ENCODE measurements at regions of chr16 and their contacts with region 1.

Region 1: DNA sequence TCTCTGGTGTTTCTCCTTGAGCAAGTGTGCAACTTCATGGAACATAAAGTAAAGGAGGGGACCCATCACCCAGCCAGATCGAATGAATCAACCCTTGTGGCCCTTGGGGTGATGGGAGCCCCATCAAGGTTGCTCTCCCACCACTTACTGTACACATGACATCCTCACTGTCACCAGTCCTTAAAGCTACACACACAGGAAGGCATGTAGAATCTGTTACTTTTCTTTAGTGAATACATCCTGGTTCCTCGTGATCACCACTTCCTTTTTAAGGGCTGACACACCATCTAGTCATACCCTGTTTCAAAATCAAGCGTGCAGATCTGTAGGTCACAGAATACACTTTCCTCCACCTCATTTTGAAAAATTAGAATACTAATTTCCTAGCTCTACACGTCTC is 22.6 kb upstream of the MPHOSPH6 start:
- DNase-seq: peak; percentile 15
- H3K4me3 Mint-ChIP-seq: no peak overlapping the region
- H3K27ac Mint-ChIP-seq: peak overlapping the region; percentile 86
- H3K4me1 Mint-ChIP-seq: peaks cover 28% of the 10 kb centered on the region
- H3K27me3 Mint-ChIP-seq: peaks cover 8% of the 10 kb centered on the region

Region 2: GRCh38 chr16:82082543-82083244 is 110.0 kb before region 1 on chr16:
- intact Hi-C with region 1: loop called (anchors 5 kb)
- DNase-seq: no peak
- H3K4me3 Mint-ChIP-seq: no peak overlapping the region
- H3K27ac Mint-ChIP-seq: no peak overlapping the region
- H3K4me1 Mint-ChIP-seq: peaks cover 11% of the 10 kb centered on the region
- H3K27me3 Mint-ChIP-seq: peaks cover 28% of the 10 kb centered on the region

Region 3: DNA sequence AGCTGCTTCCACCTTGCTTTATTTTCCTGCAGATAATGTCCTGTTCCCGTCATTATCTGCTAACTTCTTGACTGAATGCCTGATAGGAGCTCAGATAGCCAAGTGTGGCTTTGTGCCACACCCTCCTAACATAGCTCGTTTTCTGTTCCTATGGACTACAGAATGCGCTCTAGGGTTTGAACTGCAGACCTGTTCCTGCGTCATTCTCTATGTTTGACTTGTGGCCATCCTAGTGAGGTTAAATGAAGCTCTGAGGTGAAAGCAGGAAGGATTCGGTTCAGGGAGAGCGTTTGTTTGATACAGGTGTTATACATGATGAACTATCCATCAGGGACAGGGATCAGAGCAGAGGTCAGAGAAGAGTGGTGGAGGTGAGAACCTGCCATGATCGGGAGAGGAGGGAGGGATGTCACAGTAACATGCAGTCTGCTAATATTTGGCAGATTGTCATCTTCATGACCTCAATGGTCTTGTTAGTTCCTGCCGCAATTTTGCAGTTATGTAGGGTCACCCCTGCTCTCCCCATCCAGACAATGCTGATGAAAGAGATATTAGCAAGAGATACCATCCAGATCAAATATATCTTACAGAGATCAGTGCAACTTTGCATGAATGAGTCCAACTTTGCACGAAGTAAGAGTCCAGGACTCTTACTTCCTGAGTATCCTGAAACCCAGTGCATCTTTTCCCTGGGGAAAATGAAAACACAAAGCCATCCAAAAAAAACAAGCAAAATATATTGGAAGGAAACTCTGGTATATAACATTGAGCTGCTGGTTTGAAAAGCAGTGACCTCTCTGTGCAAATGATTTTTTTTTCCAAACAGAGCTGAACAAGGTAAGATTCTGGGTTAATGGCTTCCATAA is 55.5 kb before region 1 on chr16:
- intact Hi-C with region 1: loop called (anchors 10 kb)
- DNase-seq: no peak
- H3K4me3 Mint-ChIP-seq: no peak overlapping the region
- H3K27ac Mint-ChIP-seq: no peak overlapping the region
- H3K4me1 Mint-ChIP-seq: peaks cover 20% of the 10 kb centered on the region
- H3K27me3 Mint-ChIP-seq: no peaks in the 10 kb centered on the region

Region 4: DNA sequence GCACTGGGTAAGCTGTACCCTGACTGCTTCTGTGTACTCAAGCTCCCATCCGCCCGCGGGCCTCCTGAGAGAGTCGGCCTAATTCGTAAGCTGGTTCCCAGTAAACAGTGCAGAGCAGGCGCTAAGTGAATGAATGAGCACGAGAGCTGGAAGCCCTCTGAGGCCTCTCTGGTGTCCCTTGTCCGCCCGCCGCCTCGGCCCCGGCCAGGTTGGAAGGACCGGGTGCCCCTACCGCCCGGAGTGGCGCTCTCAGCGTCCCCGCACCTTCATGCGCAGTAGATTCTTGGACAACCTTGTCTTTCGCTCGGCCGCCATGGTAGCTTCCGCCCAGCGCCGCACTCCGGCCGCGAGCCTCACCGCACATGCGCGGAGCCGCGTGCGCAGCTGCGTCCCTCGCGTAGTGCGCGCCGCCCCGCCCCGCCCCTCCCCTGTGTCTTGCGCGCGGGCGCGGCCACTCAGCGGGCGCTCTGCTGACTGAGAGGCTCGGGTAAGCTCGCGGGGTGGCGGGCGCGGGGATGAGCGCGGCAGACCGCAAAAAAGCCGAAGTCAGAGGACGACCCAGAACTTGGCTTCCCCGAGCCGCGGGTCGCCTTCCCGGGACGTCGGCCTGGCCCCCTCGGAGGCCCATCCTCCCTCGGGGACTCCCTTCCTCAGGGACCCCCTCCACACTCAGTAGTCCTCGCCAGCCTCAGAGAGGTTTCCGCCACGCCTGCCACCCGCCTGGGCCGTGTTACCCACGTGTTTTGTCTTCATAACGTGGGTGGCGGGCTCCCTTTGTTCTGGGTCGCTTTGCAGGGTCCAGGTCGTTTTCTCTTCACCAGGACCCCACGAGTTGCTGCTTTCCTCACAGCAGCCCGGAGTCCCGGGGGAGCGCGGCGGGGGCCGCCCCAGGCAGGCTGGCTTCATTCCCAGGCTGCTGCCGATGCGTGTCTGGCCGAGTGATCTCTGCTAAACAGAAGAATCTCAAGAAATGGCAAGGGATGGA is 22.5 kb before region 1 on chr16 and contains the start of gene MPHOSPH6:
- intact Hi-C with region 1: loop called (anchors 1 kb)
- DNase-seq: peak; percentile 86
- H3K4me3 Mint-ChIP-seq: peak within 1 kb of the TSS; percentile 92
- H3K27ac Mint-ChIP-seq: peak within 1 kb of the TSS; percentile 93
- H3K4me1 Mint-ChIP-seq: peaks cover 17% of the 10 kb centered on the region
- H3K27me3 Mint-ChIP-seq: peaks cover 33% of the 10 kb centered on the region
- total RNA-seq, gene MPHOSPH6: 46.4 and 47.4 TPM in 2 replicates

Region 5: GRCh38 chr16:82219298-82219697 is 26.6 kb after region 1 on chr16:
- intact Hi-C with region 1: no loop called
- DNase-seq: no peak
- H3K4me3 Mint-ChIP-seq: no peak overlapping the region
- H3K27ac Mint-ChIP-seq: no peak overlapping the region
- H3K4me1 Mint-ChIP-seq: no peaks in the 10 kb centered on the region
- H3K27me3 Mint-ChIP-seq: peaks cover 22% of the 10 kb centered on the region